Right cardiac atrium (tissue), 5 donors: ENCODE measurements at regions of chr17 and their contacts with region 1.

Region 1: GRCh38 chr17:81101614-81102306 is 63.5 kb upstream of the PVALEF start:
- DNase-seq: peak; percentile 85 to 94 (median 93)
- ATAC-seq: peak; percentile 80 to 81
- H3K4me3 ChIP-seq: no peak overlapping the region
- H3K27ac ChIP-seq: no peak overlapping the region
- H3K4me1 ChIP-seq: no peaks in the 10 kb centered on the region
- H3K27me3 ChIP-seq: no peaks in the 10 kb centered on the region

Region 2: GRCh38 chr17:80426681-80427326 is 675.0 kb before region 1 on chr17:
- intact Hi-C with region 1: loop called in 1 of 4 experiments (anchors 10 kb)
- DNase-seq: peak; percentile 72 to 88 (median 88)
- ATAC-seq: peak; percentile 71 to 77
- H3K4me3 ChIP-seq: no peak overlapping the region
- H3K27ac ChIP-seq: no peak overlapping the region
- H3K4me1 ChIP-seq: no peaks in the 10 kb centered on the region
- H3K27me3 ChIP-seq: no peaks in the 10 kb centered on the region

Region 3: GRCh38 chr17:80981062-80981902 is 120.5 kb before region 1 on chr17:
- intact Hi-C with region 1: loop called in 1 of 4 experiments (anchors 10 kb)
- DNase-seq: peak in 1 of 3 donors; percentile 67
- ATAC-seq: peak; percentile 25 to 44
- H3K4me3 ChIP-seq: peak overlapping the region; percentile 4
- H3K27ac ChIP-seq: no peak overlapping the region
- H3K4me1 ChIP-seq: no peaks in the 10 kb centered on the region
- H3K27me3 ChIP-seq: no peaks in the 10 kb centered on the region

Region 4: DNA sequence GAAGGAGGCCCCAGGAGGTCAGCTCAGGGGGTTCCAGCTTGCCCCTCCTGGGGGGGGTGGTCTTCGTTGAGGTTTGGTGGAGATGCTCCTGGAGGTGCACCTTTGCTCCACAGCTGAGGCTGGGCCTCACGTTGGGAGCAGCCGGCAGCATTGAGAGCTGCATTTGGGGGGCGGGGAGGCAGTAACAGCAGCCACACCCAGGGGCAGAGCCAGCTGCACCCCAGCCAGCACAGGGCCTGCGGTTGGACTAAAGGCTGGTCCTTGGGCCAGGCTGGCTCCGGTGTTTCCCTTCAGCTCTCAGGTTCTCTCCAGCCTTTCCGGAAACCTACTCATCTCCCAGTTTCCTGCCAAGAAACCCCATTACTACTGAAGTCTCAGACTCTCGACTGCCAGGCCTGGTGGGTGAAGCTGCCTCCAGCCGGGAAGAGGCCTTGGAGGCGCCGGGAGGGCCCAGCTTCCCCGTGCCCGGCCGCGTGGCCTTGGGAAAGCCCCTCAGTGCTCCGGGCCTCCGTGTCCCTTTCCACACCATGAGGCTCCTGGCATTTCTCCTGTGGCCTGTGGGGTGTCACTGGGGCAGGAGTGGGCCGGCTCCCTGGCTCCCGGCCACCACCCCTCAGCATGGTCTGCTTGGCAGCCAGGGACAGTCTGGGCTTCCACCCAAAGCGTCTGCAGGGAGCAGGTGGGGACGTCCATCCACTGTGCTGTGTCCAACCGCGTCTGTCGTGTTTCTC is 80.8 kb before region 1 on chr17:
- intact Hi-C with region 1: loop called (anchors 2 to 5 kb)
- DNase-seq: peak; percentile 61 to 86 (median 83)
- ATAC-seq: peak; percentile 64 to 79
- H3K4me3 ChIP-seq: no peak overlapping the region
- H3K27ac ChIP-seq: no peak overlapping the region
- H3K4me1 ChIP-seq: no peaks in the 10 kb centered on the region
- H3K27me3 ChIP-seq: no peaks in the 10 kb centered on the region

Region 5: DNA sequence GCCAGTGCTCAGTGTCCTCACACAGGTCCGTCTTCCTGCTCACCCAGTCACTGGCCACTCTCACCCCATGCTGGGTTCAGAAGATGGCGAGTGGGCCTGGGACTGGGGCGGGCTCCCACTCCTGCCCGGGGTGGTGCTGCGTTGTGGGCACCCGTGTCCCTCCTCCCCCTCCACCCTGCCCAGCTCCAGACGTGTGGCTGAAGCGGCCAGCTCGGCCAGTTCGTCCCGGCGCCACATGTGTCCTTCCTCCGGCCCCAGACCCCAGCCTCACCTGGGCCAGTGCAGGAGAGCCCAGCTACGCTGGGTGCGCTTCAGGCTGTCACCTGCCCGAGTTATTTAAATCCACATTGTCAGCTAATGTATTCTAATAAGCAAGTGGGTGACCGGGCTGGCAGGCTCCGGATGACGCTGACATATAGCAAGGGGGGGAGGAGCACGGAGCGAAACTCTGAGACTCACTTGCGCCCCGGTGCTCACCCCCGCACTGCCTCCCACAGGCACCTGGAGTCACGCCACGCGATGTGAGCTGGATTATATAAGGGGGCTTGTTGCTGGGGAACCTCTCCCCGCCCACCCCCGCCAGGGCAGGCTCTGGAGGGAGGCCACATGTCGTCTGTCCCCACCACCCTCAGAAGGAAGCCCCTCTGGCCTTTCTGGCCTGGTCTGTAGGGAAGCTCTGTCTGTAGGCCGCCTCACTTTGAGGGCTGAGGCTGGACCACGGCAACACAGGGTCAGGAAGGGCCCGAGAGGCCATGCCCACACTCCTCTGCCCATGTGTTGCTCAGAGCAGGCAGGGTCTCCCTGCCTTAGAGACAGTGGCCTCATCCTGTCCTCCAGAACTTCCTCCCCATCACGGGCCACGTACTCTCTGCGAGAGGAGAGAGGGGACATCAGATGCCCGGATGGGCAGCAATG is 73.9 kb before region 1 on chr17:
- intact Hi-C with region 1: loop called (anchors 2 to 5 kb)
- DNase-seq: peak in 2 of 3 donors; percentile 50 to 56
- ATAC-seq: no peak
- H3K4me3 ChIP-seq: no peak overlapping the region
- H3K27ac ChIP-seq: no peak overlapping the region
- H3K4me1 ChIP-seq: peaks cover 12% of the 10 kb centered on the region
- H3K27me3 ChIP-seq: no peaks in the 10 kb centered on the region